Naive thymus-derived CD4-positive, alpha-beta T cell (primary cell): ENCODE measurements at regions of chr20 and their contacts with region 1.

Region 1: DNA sequence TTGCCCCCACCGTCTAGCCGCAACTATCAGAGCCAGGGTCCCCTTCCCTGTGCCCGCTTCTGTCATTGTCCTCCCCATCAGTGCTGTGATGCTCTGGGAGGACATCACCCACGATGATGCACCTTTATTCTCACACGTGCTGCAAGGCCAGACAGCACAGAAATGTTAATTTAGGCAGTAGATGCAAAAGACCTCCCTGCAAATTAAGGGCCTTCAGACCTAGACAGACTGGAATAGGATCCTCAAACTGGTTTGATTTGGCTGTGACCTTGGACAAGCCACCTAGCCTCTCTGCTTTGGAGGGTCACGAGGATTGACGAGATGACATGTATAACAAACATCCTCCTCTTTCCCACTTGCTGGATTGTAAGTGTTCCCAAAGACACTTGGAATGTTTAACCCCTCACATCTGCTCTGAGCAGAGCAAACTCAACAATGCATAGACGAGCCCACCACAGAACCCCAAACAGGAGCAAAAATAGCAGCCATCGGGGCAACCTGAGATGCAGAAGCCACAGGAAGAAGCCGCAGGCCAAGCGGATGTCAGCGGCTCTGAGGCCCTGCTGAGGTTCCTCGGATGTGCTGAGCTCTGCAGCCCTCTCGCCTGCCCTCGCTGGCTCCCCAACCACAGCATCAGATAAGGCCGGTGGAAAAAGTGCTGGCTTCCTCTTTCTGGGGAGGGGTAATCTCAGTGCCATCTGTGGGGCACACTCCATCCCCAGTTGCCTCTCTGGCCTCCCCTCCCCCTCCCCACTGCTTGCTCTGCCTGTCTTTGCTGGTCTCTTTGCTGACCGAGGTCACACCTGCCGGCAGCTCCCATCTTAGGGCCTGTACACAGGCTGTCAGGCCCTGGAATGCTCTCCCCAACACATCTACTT is 35.3 kb downstream of the TOX2 start:
- DNase-seq: peak; percentile 46 to 74 (median 68)
- ATAC-seq: peak; percentile 96
- H3K4me3 ChIP-seq: peak overlapping the region; percentile 28
- H3K4me3 Mint-ChIP-seq: peak overlapping the region; percentile 42 to 83 (median 76)
- H3K27ac ChIP-seq: no peak overlapping the region
- H3K27ac Mint-ChIP-seq: peak overlapping the region; percentile 5 to 84 (median 61)
- H3K4me1 ChIP-seq: peaks cover 63 to 65% of the 10 kb centered on the region in 2 donors
- H3K4me1 Mint-ChIP-seq: peaks cover 71 to 95% (median 84%) of the 10 kb centered on the region in 7 donors
- H3K27me3 ChIP-seq: peaks cover 0 to 5% of the 10 kb centered on the region in 2 donors
- H3K27me3 Mint-ChIP-seq: peaks cover 0 to 55% (median 4%) of the 10 kb centered on the region in 5 donors

Region 2: GRCh38 chr20:43840382-43841070 is 109.5 kb before region 1 on chr20:
- CTCF ChIA-PET with region 1: no interaction called
- POLR2A ChIA-PET with region 1: interaction called, 3 read pairs
- intact Hi-C with region 1: loop called in 1 of 2 experiments (anchors 5 kb)
- DNase-seq: peak in 6 of 9 donors; percentile 17 to 38 (median 23)
- ATAC-seq: peak; percentile 56
- H3K4me3 ChIP-seq: no peak overlapping the region
- H3K4me3 Mint-ChIP-seq: no peak overlapping the region
- H3K27ac ChIP-seq: no peak overlapping the region
- H3K27ac Mint-ChIP-seq: peak overlapping the region in 2 of 9 donors; percentile 67 to 74
- H3K4me1 ChIP-seq: peaks cover 0 to 11% of the 10 kb centered on the region in 2 donors
- H3K4me1 Mint-ChIP-seq: peaks cover 10 to 55% (median 18%) of the 10 kb centered on the region in 7 donors
- H3K27me3 ChIP-seq: no peaks in the 10 kb centered on the region
- H3K27me3 Mint-ChIP-seq: peaks cover 0 to 13% (median 0%) of the 10 kb centered on the region in 5 donors

Region 3: GRCh38 chr20:43963872-43964791 is 14.2 kb after region 1 on chr20:
- CTCF ChIA-PET with region 1: interaction called, 3 read pairs
- POLR2A ChIA-PET with region 1: interaction called, 6 read pairs
- intact Hi-C with region 1: loop called in 1 of 2 experiments (anchors 1 kb)
- DNase-seq: peak in 7 of 9 donors; percentile 71 to 86 (median 83)
- ATAC-seq: peak; percentile 94
- H3K4me3 ChIP-seq: no peak overlapping the region
- H3K4me3 Mint-ChIP-seq: peak overlapping the region; percentile 47 to 80 (median 72)
- H3K27ac ChIP-seq: peak overlapping the region; percentile 18
- H3K27ac Mint-ChIP-seq: peak overlapping the region in 4 of 9 donors; percentile 16 to 90 (median 59)
- H3K4me1 ChIP-seq: peaks cover 43 to 65% of the 10 kb centered on the region in 2 donors
- H3K4me1 Mint-ChIP-seq: peaks cover 25 to 52% (median 43%) of the 10 kb centered on the region in 7 donors
- H3K27me3 ChIP-seq: no peaks in the 10 kb centered on the region
- H3K27me3 Mint-ChIP-seq: peaks cover 0 to 18% (median 0%) of the 10 kb centered on the region in 5 donors

Region 4: DNA sequence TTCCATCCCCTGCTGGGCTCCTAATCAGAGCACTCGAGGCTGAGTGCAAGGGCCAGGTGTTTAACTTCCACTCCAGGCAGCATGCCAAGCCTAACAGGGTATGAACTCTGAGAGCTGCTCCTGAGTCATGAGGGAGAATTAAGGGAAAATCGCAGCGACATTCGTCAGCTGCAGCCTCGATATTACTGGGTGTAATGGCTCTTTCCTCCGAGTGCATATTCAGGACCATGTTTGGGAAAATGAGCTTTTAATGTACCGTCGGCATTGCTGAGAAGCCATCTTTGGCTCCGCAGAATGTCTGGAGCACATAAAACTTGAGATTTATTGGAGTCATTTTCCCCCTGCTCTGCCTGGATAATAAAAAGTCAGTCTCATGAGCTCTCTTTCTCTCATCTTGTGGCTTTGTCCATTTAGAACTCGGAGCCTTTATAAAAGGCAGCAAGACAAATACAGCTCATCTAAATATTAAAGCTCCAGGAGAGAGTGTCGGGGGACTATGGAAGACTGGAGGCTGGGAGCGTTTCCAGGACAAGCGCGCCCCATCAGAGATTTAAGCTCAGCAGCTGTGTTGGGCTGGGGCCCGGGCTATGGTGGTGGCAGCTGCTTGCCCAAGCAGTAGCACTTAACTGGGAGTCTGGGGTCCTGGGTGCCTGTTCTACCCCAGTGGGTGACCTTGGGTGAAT is 68.4 kb after region 1 on chr20:
- CTCF ChIA-PET with region 1: no interaction called
- POLR2A ChIA-PET with region 1: no interaction called
- intact Hi-C with region 1: loop called in 1 of 2 experiments (anchors 2 kb)
- DNase-seq: no peak
- ATAC-seq: no peak
- H3K4me3 ChIP-seq: no peak overlapping the region
- H3K4me3 Mint-ChIP-seq: peak overlapping the region in 3 of 10 donors; percentile 5 to 83 (median 70)
- H3K27ac ChIP-seq: no peak overlapping the region
- H3K27ac Mint-ChIP-seq: peak overlapping the region in 1 of 9 donors; percentile 17
- H3K4me1 ChIP-seq: peaks cover 26 to 33% of the 10 kb centered on the region in 2 donors
- H3K4me1 Mint-ChIP-seq: peaks cover 21 to 56% (median 43%) of the 10 kb centered on the region in 7 donors
- H3K27me3 ChIP-seq: no peaks in the 10 kb centered on the region
- H3K27me3 Mint-ChIP-seq: peaks cover 0 to 69% (median 5%) of the 10 kb centered on the region in 5 donors